ENCODE measurements at regions of chrX and their contacts with region 1.

Region 1: DNA sequence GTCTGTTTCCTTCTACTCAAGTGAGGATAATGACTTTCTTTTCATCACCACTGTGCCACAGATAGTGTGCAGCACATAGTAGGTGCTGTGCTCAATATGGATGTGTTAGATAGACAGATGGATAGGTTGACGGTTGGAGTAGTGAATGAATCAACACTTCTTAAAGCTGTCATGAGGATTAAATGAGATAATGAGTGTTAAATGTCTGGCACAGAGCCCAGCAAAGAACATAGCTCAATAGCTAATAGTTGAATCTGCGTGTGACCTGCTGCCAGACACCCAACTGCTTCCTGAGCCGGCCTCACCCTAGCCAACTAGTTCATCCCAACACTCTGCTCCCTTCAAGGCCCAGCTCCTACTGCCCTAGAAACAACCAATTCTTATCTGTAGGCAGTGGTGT is 67.7 kb upstream of the PJA1 start:
- DNase-seq: no peak

Region 2: DNA sequence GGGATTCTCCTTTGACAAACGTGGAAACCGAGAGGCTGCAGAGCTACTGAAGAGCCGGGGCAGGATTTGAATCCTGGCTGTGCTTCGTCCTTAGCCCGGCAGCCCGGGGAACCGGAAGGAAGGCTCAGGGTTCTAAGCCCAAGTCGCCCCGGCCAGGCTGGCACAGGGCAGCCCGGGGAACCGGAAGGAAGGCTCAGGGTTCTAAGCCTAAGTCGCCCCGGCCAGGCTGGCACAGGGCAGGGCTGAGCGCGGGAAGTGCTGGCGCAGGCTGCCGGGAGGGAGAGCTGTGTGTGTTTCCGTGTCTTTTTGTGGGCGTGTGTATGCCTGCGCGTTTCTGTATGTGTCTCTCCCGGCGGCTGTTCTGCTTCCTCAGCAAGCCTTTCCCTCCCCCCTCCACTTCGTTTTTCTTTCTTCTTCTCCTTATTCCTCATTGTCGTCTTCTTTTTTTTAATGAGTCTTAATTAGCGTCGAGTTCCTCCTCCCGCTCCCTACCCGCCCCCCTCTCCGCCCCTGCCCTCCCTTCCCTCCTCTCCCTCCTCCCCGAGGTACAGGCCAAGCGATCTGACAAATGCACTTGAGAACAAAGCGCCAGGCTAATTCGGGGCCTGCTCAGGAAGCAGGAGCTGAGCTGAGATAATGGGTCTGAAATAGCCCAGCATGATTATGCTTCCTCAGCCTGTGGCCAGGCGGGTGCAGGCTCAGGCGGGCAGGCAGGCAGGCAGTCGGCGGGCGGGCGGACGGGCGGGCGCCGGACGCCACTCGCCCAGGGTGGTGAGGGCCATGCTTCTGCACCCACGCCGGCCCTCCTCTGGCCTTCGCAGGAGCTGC is 338.2 kb before region 1 on chrX:
- intact Hi-C with region 1: no loop called
- DNase-seq: peak; percentile 87

Region 3: DNA sequence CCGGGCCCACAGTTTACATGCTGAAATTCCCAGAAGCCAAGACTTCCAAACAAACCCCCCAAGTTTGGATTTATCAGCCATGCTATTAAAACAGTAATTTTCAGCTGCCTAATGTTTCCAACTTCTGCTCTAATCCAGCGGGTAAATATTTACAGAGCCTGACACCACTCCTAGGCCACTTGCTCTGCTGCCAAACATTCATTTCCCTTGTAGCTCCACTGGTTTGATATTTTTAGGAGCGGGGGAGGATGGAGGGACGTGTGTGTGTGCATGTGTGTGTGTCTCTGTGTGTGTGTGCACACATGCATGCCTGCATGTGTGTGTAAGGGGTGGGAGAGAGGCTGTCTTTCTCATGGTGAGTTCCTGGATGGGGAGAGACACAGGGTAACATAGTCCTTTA is 48.0 kb after region 1 on chrX:
- intact Hi-C with region 1: loop called (anchors 5 kb)
- DNase-seq: no peak

Measured in cardiac septum (tissue), 1 donor.